B cell (primary cell): ENCODE measurements at regions of chr7 and their contacts with region 1.

Region 1: DNA sequence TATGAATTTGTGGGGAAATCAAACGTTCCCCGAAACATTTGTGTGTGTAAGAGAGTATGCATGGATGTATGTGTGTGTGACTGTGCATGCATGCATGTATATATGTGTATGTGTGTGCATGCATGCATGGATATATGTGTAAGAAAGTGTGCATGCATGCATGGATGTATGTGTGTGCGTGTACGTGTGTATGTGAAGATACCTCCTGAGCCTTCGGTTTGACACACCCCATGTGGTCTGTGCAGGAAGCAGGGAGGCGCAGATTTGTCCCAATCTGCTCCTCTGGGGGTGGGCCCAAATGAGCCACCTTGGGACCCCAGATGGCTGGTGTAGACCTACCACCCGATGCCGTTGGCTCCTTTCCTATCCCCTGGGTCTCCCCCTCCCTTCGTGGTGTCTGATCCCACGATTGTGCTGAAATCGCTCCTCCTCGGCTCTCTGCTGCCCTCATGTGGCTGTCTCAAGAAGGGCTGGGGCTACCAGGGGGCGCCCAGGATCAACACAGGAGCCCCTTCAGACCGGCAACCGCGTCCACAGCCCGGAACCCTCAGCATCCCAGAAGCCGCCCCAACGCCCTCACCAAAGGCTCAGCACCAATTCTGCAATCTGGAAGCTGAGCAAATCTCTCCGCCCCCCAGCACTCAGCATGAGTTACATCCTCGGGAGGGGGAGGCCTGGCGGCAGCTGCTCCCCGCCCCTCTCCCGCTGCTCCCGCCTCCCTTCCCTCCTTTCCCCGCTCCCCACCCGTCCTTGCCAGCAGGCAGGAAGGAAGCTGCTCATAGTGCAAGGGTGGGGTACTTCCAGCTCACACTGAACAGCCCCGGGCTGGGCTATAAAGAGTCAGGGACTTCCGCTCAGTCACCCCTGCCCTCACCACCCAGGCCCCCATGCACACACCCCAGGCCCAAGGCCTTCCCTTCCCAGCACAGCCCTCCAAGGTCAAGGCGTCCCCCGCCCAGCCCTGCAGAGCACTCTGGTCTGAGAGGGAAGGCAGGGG is 2.3 kb upstream of the NOS3 start:
- DNase-seq: peak; percentile 68
- ATAC-seq: peak; percentile 48
- H3K4me3 ChIP-seq: no peak overlapping the region
- H3K4me3 Mint-ChIP-seq: no peak overlapping the region
- H3K27ac ChIP-seq: no peak overlapping the region
- H3K27ac Mint-ChIP-seq: no peak overlapping the region
- H3K4me1 ChIP-seq: peaks cover 8 to 10% of the 10 kb centered on the region in 2 donors
- H3K4me1 Mint-ChIP-seq: peaks cover 13% of the 10 kb centered on the region
- H3K27me3 ChIP-seq: peaks cover 0 to 52% (median 10%) of the 10 kb centered on the region in 4 experiments
- H3K27me3 Mint-ChIP-seq: peaks cover 60% of the 10 kb centered on the region
- CTCF ChIP-seq: peak; percentile 72

Region 2: GRCh38 chr7:150778738-150779301 is 209.7 kb before region 1 on chr7:
- CTCF ChIA-PET with region 1: interaction called, 5 read pairs
- POLR2A ChIA-PET with region 1: no interaction called
- intact Hi-C with region 1: loop called (anchors 10 kb)
- DNase-seq: peak; percentile 70
- ATAC-seq: peak; percentile 49
- H3K4me3 ChIP-seq: no peak overlapping the region
- H3K4me3 Mint-ChIP-seq: no peak overlapping the region
- H3K27ac ChIP-seq: no peak overlapping the region
- H3K27ac Mint-ChIP-seq: no peak overlapping the region
- H3K4me1 ChIP-seq: no peaks in the 10 kb centered on the region
- H3K4me1 Mint-ChIP-seq: no peaks in the 10 kb centered on the region
- H3K27me3 ChIP-seq: no peaks in the 10 kb centered on the region
- H3K27me3 Mint-ChIP-seq: peaks cover 15% of the 10 kb centered on the region
- CTCF ChIP-seq: peak; percentile 98

Region 3: DNA sequence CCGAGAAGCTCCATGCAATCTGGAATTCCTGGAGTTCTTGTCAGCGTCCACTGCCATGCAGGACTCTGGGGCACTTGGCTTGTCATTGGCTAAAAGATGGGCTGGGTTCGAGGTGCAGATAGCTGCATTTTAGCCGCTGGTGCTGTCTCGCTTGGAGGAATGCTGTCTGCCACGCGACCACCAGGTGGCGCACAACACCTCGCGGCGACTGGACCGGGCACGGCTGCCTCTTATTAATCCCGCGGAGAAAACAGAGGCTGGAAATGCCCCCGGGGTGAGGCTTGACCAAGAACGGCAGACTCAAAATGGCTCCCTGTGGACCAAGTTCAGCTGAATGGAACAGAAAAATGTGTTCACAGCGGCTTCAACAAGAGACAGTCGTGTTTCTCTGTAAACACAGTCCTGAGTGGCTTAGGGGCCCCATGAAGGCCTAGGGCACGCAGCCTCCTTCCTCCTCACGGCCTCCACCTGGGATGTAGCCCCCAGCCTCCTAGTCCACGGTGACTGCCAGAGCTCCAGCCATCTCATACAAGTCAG is 90.0 kb before region 1 on chr7:
- CTCF ChIA-PET with region 1: interaction called, 5 read pairs
- POLR2A ChIA-PET with region 1: no interaction called
- intact Hi-C with region 1: loop called (anchors 1 kb)
- DNase-seq: peak; percentile 79
- ATAC-seq: peak; percentile 70
- H3K4me3 ChIP-seq: peak overlapping the region in 2 of 5 experiments; percentile 29 to 39
- H3K4me3 Mint-ChIP-seq: peak overlapping the region; percentile 51
- H3K27ac ChIP-seq: peak overlapping the region in 1 of 2 donors; percentile 81
- H3K27ac Mint-ChIP-seq: peak overlapping the region; percentile 28
- H3K4me1 ChIP-seq: peaks cover 26 to 55% of the 10 kb centered on the region in 2 donors
- H3K4me1 Mint-ChIP-seq: peaks cover 38% of the 10 kb centered on the region
- H3K27me3 ChIP-seq: peaks cover 0 to 18% (median 9%) of the 10 kb centered on the region in 4 experiments
- H3K27me3 Mint-ChIP-seq: peaks cover 44% of the 10 kb centered on the region
- CTCF ChIP-seq: peak; percentile 96

Region 4: GRCh38 chr7:150962553-150963399 is 25.8 kb before region 1 on chr7:
- CTCF ChIA-PET with region 1: interaction called, 39 read pairs
- POLR2A ChIA-PET with region 1: no interaction called
- intact Hi-C with region 1: loop called (anchors 1 kb)
- DNase-seq: peak; percentile 67
- ATAC-seq: peak; percentile 82
- H3K4me3 ChIP-seq: no peak overlapping the region
- H3K4me3 Mint-ChIP-seq: no peak overlapping the region
- H3K27ac ChIP-seq: no peak overlapping the region
- H3K27ac Mint-ChIP-seq: no peak overlapping the region
- H3K4me1 ChIP-seq: peaks cover 3 to 5% of the 10 kb centered on the region in 2 donors
- H3K4me1 Mint-ChIP-seq: peaks cover 2% of the 10 kb centered on the region
- H3K27me3 ChIP-seq: peaks cover 0 to 49% (median 5%) of the 10 kb centered on the region in 4 experiments
- H3K27me3 Mint-ChIP-seq: peaks cover 48% of the 10 kb centered on the region
- CTCF ChIP-seq: peak; percentile 77

Region 5: DNA sequence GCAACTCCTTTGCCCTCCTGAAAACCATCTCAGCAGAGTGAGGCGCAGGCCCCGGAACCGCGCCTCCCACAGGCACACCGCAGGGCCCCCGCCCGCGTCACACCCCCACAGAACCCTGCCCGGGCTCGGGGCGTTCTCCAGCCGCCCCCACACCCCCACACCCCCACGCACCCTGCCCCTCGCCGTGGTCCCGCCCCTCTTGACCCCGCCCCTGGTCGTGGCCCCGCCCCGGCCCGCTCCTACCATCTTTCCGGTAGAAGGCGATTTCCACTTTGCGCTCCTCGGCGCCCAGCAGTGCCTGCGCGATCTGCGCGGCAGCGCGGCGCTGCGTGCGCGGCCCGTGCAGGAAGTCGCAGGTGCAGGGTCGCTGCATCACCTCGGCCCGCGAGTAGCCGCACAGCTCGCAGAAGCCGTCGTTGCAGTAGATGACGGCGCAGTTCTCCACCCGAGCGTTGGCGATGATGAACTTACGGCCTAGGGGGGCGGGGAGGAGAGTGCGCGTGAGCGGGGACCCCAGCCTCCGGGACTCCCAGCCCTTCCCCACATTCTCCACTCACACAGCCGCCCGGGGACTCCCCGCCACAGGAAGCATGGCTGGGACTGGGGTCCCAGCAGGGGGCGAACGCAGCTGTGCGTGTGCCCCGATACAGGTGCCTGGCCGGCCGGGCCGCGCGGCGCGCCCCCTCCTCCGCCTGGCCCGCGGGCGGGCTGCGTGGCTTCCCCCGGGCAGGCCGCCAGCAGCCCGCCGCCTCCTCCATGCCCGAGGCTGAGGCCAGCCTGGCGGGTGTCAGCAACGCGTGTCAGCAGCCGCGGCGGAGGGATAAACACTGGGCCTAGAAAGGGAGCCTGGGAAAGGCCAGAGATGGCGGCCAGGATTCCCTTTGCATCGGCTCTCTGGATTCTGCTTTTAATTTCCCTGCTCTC is 13.8 kb before region 1 on chr7:
- CTCF ChIA-PET with region 1: interaction called, 8 read pairs
- POLR2A ChIA-PET with region 1: no interaction called
- intact Hi-C with region 1: loop called (anchors 1 kb)
- DNase-seq: peak; percentile 81
- ATAC-seq: peak; percentile 71
- H3K4me3 ChIP-seq: peak overlapping the region; percentile 21 to 74 (median 60)
- H3K4me3 Mint-ChIP-seq: peak overlapping the region; percentile 94
- H3K27ac ChIP-seq: peak overlapping the region in 1 of 2 donors; percentile 64
- H3K27ac Mint-ChIP-seq: peak overlapping the region; percentile 87
- H3K4me1 ChIP-seq: peaks cover 37 to 42% of the 10 kb centered on the region in 2 donors
- H3K4me1 Mint-ChIP-seq: peaks cover 43% of the 10 kb centered on the region
- H3K27me3 ChIP-seq: peaks cover 0 to 41% (median 28%) of the 10 kb centered on the region in 4 experiments
- H3K27me3 Mint-ChIP-seq: peaks cover 19% of the 10 kb centered on the region
- CTCF ChIP-seq: peak; percentile 33